Posterior vena cava (tissue), 2 donors: ENCODE measurements at regions of chr1 and their contacts with region 1.

Region 1: GRCh38 chr1:44684525-44684924 is 10.0 kb downstream of the ARMH1 start:
- DNase-seq: no peak

Region 2: DNA sequence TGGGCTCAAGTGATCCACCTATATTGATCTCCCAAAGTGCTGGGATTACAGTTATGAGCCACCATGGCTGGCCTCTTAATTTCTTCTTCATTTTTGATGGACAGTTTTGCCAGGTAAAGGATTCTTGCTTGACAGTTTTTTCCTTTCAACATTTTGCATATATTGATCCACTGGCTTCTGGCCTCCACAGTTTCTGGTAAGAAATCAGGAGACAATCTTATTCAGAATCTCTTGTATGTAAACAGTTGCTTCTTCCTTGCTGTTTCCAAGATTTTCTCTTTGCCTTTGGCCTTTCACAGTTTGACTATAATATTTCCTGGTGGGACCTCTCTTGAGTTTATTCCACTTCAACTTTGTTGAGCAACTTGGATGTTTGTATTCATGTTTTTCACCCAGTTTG is 523.0 kb before region 1 on chr1:
- intact Hi-C with region 1: loop called in 1 of 2 experiments (anchors 5 kb)
- DNase-seq: no peak